ENCODE measurements at regions of chr4 and their contacts with region 1.

Region 1: DNA sequence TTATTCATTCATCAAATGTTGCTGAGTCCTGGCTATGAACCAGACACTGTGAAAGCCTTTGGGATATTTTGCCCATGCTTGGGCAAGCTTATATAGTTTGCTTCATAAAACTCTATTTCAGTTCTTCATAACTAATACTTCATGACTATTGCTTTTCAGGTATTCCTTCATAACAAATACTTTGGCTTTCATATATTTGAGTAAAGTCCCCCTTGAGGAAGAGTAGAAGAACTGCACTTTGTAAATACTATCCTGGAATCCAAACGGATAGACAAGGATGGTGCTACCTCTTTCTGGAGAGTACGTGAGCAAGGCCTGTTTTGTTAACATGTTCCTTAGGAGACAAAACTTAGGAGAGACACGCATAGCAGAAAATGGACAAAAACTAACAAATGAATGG is 1.7 kb upstream of the AFP start:
- DNase-seq: no peak
- ATAC-seq: no peak
- H3K4me3 ChIP-seq: no peak overlapping the region
- H3K4me3 Mint-ChIP-seq: no peak overlapping the region
- H3K27ac ChIP-seq: no peak overlapping the region
- H3K27ac Mint-ChIP-seq: no peak overlapping the region
- H3K4me1 ChIP-seq: no peaks in the 10 kb centered on the region
- H3K4me1 Mint-ChIP-seq: no peaks in the 10 kb centered on the region
- H3K27me3 ChIP-seq: no peaks in the 10 kb centered on the region
- H3K27me3 Mint-ChIP-seq: peaks cover 0 to 16% (median 10%) of the 10 kb centered on the region in 5 donors

Region 2: DNA sequence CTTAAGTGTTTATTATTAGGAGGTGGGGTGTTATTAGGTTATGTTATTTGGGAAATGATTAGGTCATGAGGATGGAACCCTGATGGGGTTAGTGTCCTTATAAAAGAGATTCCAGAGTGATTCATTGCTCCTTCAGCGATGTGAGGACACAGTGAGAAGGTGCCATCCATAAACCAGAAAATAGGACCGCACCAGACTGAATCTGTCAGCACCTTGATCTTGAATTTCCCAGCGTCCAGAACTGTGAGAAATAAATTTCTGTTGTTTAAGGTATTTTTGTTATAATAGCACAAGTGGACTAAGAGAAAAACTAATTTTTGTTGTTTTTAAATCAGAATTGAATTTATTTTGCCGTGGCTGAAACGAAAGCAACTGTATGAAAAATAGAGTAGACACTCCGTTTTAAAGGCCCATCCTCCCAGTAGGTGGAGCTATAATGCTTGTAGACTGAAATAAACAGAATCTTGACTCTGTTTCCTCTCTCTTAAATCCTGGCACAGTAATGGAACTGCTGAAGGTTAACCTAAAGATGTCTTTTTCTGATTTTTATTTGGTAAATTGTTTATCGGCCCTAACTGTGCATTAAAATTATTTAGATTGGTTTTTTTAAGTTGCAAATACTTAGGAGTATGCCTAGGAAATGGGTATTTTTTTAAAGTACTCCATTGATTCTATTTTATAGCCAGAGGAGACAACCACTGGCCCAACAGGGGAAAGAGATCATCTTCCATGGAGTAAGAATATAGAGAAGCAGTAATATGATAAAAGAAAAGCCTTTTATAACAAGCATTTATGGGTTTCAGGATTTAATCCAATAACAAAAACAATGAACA is 732.1 kb before region 1 on chr4:
- CTCF ChIA-PET with region 1: no interaction called
- POLR2A ChIA-PET with region 1: no interaction called
- intact Hi-C with region 1: loop called in 1 of 2 experiments (anchors 5 kb)
- DNase-seq: peak in 6 of 9 donors; percentile 10 to 32 (median 22)
- ATAC-seq: peak; percentile 56
- H3K4me3 ChIP-seq: no peak overlapping the region
- H3K4me3 Mint-ChIP-seq: peak overlapping the region in 9 of 10 donors; percentile 42 to 85 (median 83)
- H3K27ac ChIP-seq: no peak overlapping the region
- H3K27ac Mint-ChIP-seq: peak overlapping the region in 2 of 9 donors; percentile 3 to 71
- H3K4me1 ChIP-seq: no peaks in the 10 kb centered on the region
- H3K4me1 Mint-ChIP-seq: peaks cover 0 to 6% (median 0%) of the 10 kb centered on the region in 7 donors
- H3K27me3 ChIP-seq: no peaks in the 10 kb centered on the region
- H3K27me3 Mint-ChIP-seq: peaks cover 0 to 14% (median 6%) of the 10 kb centered on the region in 5 donors

Region 3: GRCh38 chr4:73341454-73341853 is 92.9 kb before region 1 on chr4:
- CTCF ChIA-PET with region 1: no interaction called
- POLR2A ChIA-PET with region 1: no interaction called
- intact Hi-C with region 1: no loop called
- DNase-seq: no peak
- ATAC-seq: no peak
- H3K4me3 ChIP-seq: no peak overlapping the region
- H3K4me3 Mint-ChIP-seq: no peak overlapping the region
- H3K27ac ChIP-seq: no peak overlapping the region
- H3K27ac Mint-ChIP-seq: no peak overlapping the region
- H3K4me1 ChIP-seq: no peaks in the 10 kb centered on the region
- H3K4me1 Mint-ChIP-seq: no peaks in the 10 kb centered on the region
- H3K27me3 ChIP-seq: no peaks in the 10 kb centered on the region
- H3K27me3 Mint-ChIP-seq: peaks cover 0 to 11% (median 6%) of the 10 kb centered on the region in 5 donors